A673 (cell line): ENCODE measurements at regions of chr7 and their contacts with region 1.

Region 1: GRCh38 chr7:129091484-129092002 is 36.6 kb upstream of the TNPO3 start:
- DNase-seq: peak; percentile 83
- H3K4me3 ChIP-seq: no peak overlapping the region
- H3K27ac ChIP-seq: no peak overlapping the region
- H3K4me1 ChIP-seq: no peaks in the 10 kb centered on the region
- H3K27me3 ChIP-seq: no peaks in the 10 kb centered on the region
- CTCF ChIP-seq: peak; percentile 99

Region 2: GRCh38 chr7:128904381-128905197 is 187.0 kb before region 1 on chr7:
- CTCF ChIA-PET with region 1: no interaction called
- POLR2A ChIA-PET with region 1: no interaction called
- intact Hi-C with region 1: loop called (anchors 1 kb)
- DNase-seq: peak; percentile 76
- H3K4me3 ChIP-seq: no peak overlapping the region
- H3K27ac ChIP-seq: no peak overlapping the region
- H3K4me1 ChIP-seq: no peaks in the 10 kb centered on the region
- H3K27me3 ChIP-seq: no peaks in the 10 kb centered on the region
- CTCF ChIP-seq: peak; percentile 72

Region 3: GRCh38 chr7:129202058-129202777 is 110.7 kb after region 1 on chr7:
- CTCF ChIA-PET with region 1: no interaction called
- POLR2A ChIA-PET with region 1: no interaction called
- intact Hi-C with region 1: no loop called
- DNase-seq: no peak
- H3K4me3 ChIP-seq: no peak overlapping the region
- H3K27ac ChIP-seq: no peak overlapping the region
- H3K4me1 ChIP-seq: no peaks in the 10 kb centered on the region
- H3K27me3 ChIP-seq: no peaks in the 10 kb centered on the region
- CTCF ChIP-seq: no peak